CD8-positive, alpha-beta T cell (primary cell): ENCODE measurements at regions of chrX and their contacts with region 1.

Region 1: GRCh38 chrX:11770320-11770719 is 12.3 kb downstream of the MSL3 start:
- DNase-seq: peak in 7 of 9 experiments; percentile 24 to 83 (median 53)
- ATAC-seq: peak; percentile 60
- H3K4me3 ChIP-seq: no peak overlapping the region
- H3K4me3 Mint-ChIP-seq: no peak overlapping the region
- H3K27ac ChIP-seq: peak overlapping the region in 1 of 2 experiments; percentile 40
- H3K27ac Mint-ChIP-seq: peak overlapping the region; percentile 84
- H3K4me1 ChIP-seq: peaks cover 31% of the 10 kb centered on the region
- H3K4me1 Mint-ChIP-seq: peaks cover 40% of the 10 kb centered on the region
- H3K27me3 ChIP-seq: no peaks in the 10 kb centered on the region
- H3K27me3 Mint-ChIP-seq: no peaks in the 10 kb centered on the region
- CTCF ChIP-seq: peak; percentile 65

Region 2: GRCh38 chrX:11143931-11144678 is 626.2 kb before region 1 on chrX:
- CTCF ChIA-PET with region 1: no interaction called
- POLR2A ChIA-PET with region 1: no interaction called
- intact Hi-C with region 1: loop called in 1 of 2 experiments (anchors 10 kb)
- DNase-seq: peak; percentile 3 to 73 (median 36)
- ATAC-seq: peak; percentile 51
- H3K4me3 ChIP-seq: no peak overlapping the region
- H3K4me3 Mint-ChIP-seq: peak overlapping the region; percentile 49
- H3K27ac ChIP-seq: no peak overlapping the region
- H3K27ac Mint-ChIP-seq: no peak overlapping the region
- H3K4me1 ChIP-seq: no peaks in the 10 kb centered on the region
- H3K4me1 Mint-ChIP-seq: peaks cover 3% of the 10 kb centered on the region
- H3K27me3 ChIP-seq: no peaks in the 10 kb centered on the region
- H3K27me3 Mint-ChIP-seq: peaks cover 6% of the 10 kb centered on the region
- CTCF ChIP-seq: peak; percentile 53

Region 3: GRCh38 chrX:11724122-11725017 is 46.0 kb before region 1 on chrX:
- CTCF ChIA-PET with region 1: interaction called, 5 read pairs
- POLR2A ChIA-PET with region 1: no interaction called
- intact Hi-C with region 1: loop called (anchors 1 to 2 kb)
- DNase-seq: peak in 3 of 9 experiments; percentile 8 to 52 (median 37)
- ATAC-seq: no peak
- H3K4me3 ChIP-seq: no peak overlapping the region
- H3K4me3 Mint-ChIP-seq: no peak overlapping the region
- H3K27ac ChIP-seq: no peak overlapping the region
- H3K27ac Mint-ChIP-seq: no peak overlapping the region
- H3K4me1 ChIP-seq: no peaks in the 10 kb centered on the region
- H3K4me1 Mint-ChIP-seq: no peaks in the 10 kb centered on the region
- H3K27me3 ChIP-seq: no peaks in the 10 kb centered on the region
- H3K27me3 Mint-ChIP-seq: peaks cover 5% of the 10 kb centered on the region
- CTCF ChIP-seq: peak; percentile 55

Region 4: GRCh38 chrX:11787564-11787963 is 17.2 kb after region 1 on chrX:
- CTCF ChIA-PET with region 1: interaction called, 10 read pairs
- POLR2A ChIA-PET with region 1: no interaction called
- intact Hi-C with region 1: no loop called
- DNase-seq: peak; percentile 38 to 80 (median 66)
- ATAC-seq: peak; percentile 79
- H3K4me3 ChIP-seq: peak overlapping the region; percentile 34 to 35
- H3K4me3 Mint-ChIP-seq: peak overlapping the region; percentile 76
- H3K27ac ChIP-seq: no peak overlapping the region
- H3K27ac Mint-ChIP-seq: peak overlapping the region; percentile 60
- H3K4me1 ChIP-seq: peaks cover 19% of the 10 kb centered on the region
- H3K4me1 Mint-ChIP-seq: peaks cover 19% of the 10 kb centered on the region
- H3K27me3 ChIP-seq: no peaks in the 10 kb centered on the region
- H3K27me3 Mint-ChIP-seq: no peaks in the 10 kb centered on the region
- CTCF ChIP-seq: peak; percentile 46

Region 5: DNA sequence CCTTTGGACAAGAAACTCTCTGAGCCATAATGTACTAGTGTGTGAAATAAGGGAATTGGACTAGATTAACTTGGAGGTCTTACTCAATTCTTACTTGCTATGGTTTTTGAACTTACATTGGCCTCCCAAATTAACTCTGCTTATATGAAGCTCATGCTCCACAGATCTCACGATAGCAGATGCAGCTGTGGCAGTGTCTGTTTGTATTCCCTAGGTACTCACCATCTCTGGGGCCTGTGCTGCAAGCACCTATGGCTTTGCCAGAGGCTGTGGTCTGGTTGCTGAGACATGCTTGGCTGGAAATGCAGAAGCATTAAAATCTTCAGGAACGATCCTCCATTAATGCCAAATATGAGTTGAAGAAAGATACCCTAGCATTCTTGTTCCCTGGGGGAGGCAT is 100.5 kb after region 1 on chrX:
- CTCF ChIA-PET with region 1: no interaction called
- POLR2A ChIA-PET with region 1: no interaction called
- intact Hi-C with region 1: no loop called
- DNase-seq: no peak
- ATAC-seq: no peak
- H3K4me3 ChIP-seq: no peak overlapping the region
- H3K4me3 Mint-ChIP-seq: no peak overlapping the region
- H3K27ac ChIP-seq: no peak overlapping the region
- H3K27ac Mint-ChIP-seq: no peak overlapping the region
- H3K4me1 ChIP-seq: no peaks in the 10 kb centered on the region
- H3K4me1 Mint-ChIP-seq: no peaks in the 10 kb centered on the region
- H3K27me3 ChIP-seq: no peaks in the 10 kb centered on the region
- H3K27me3 Mint-ChIP-seq: no peaks in the 10 kb centered on the region
- CTCF ChIP-seq: no peak

Region 6: DNA sequence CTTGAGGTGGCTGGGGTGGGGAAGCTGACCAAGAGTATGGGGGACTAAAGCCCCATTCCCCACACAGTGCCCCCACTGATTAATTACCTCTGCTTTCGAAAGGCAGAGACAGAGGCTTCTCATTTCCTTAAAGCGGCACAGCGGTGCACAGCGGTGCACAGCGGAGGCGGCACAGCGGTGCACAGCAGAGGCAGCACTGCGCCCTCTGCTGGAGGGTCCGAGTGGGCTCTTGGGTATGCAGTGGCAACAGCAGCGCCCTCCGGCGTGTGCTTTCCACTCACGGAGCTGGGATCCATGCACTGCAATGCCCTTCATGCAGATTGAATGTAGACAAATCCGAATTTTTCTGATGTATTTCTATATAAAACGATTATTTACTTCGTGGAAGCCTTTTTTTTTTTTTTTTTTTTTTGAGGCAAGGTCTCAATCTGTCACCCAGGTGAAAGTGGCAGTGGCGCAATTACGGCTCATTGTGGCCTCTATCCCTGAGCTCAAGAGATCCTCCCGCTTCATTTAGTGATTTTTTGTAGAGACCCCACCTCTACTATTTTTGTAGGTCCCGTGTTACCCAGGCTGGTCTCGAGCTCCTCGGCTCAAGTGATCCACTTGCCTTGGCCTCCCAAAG is 1001.2 kb after region 1 on chrX:
- CTCF ChIA-PET with region 1: no interaction called
- POLR2A ChIA-PET with region 1: no interaction called
- intact Hi-C with region 1: loop called in 1 of 2 experiments (anchors 5 kb)
- DNase-seq: peak; percentile 34 to 87 (median 68)
- ATAC-seq: peak; percentile 99
- H3K4me3 ChIP-seq: no peak overlapping the region
- H3K4me3 Mint-ChIP-seq: no peak overlapping the region
- H3K27ac ChIP-seq: no peak overlapping the region
- H3K27ac Mint-ChIP-seq: no peak overlapping the region
- H3K4me1 ChIP-seq: peaks cover 5% of the 10 kb centered on the region
- H3K4me1 Mint-ChIP-seq: peaks cover 8% of the 10 kb centered on the region
- H3K27me3 ChIP-seq: no peaks in the 10 kb centered on the region
- H3K27me3 Mint-ChIP-seq: peaks cover 10% of the 10 kb centered on the region
- CTCF ChIP-seq: peak; percentile 78